Activated CD4-positive, alpha-beta T cell treated with anti-CD3 and anti-CD28 coated beads, Interleukin-2, amount 10 ng/mL, durations not matched to agents 24 days and 14 days (primary cell): ENCODE measurements at regions of chr16 and their contacts with region 1.

Region 1: GRCh38 chr16:23435500-23435899 is 17.5 kb downstream of the COG7 start:
- DNase-seq: peak; percentile 89
- H3K4me3 Mint-ChIP-seq: no peak overlapping the region
- H3K27ac Mint-ChIP-seq: no peak overlapping the region
- H3K4me1 Mint-ChIP-seq: no peaks in the 10 kb centered on the region
- H3K27me3 Mint-ChIP-seq: no peaks in the 10 kb centered on the region

Region 2: GRCh38 chr16:22898874-22899348 is 536.6 kb before region 1 on chr16:
- intact Hi-C with region 1: loop called (anchors 2 kb)
- DNase-seq: peak; percentile 88
- H3K4me3 Mint-ChIP-seq: no peak overlapping the region
- H3K27ac Mint-ChIP-seq: no peak overlapping the region
- H3K4me1 Mint-ChIP-seq: no peaks in the 10 kb centered on the region
- H3K27me3 Mint-ChIP-seq: peaks cover 11% of the 10 kb centered on the region

Region 3: DNA sequence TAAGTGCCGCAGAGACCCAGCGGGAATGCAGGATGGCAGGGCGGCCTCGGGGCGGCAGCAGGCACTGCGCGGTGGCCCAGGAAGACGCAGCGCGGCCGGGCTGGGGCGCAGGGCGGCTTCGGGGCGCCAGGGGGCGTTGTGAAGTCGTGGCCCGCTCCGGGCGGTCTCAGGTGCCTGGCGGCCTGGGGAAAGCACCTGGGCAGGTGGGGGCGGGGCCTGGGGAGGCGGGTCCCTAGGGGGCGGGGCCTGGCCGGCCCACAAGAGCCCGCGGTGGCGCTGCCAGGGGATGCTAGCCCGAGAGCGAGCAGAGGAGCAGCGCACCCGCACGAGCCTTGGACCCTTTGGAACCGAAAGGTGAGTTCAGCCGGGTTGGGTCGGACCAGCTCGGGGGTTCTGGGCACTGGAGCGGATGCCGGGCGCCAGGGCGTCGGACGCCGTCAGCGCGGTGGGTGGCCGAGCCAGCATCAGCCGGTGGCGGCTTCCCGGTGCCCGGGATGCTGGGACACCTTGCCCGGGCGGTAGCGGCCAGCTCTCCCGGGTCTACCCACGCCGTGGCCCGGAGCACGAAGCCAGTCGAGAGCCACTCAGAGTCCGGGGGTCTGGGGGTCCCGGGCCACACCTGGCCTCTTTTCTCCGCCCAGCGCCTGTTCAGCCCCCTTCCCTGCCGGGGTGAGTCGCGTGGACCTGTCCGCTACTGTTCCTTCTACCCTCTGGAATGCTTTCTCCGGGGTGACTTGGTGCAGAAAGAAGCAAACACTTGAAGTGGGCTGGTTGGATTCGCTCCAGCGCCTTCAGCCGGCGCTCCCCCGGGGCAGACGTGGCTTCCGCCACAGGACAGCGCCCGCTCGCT is 252.8 kb before region 1 on chr16 and contains the start of gene SCNN1G:
- intact Hi-C with region 1: loop called (anchors 1 kb)
- DNase-seq: peak; percentile 92
- H3K4me3 Mint-ChIP-seq: peak within 1 kb of the TSS; percentile 50
- H3K27ac Mint-ChIP-seq: no peak within 1 kb of the TSS
- H3K4me1 Mint-ChIP-seq: peaks cover 4% of the 10 kb centered on the region
- H3K27me3 Mint-ChIP-seq: peaks cover 53% of the 10 kb centered on the region
- total RNA-seq, gene SCNN1G: not detected in 2 replicates

Region 4: DNA sequence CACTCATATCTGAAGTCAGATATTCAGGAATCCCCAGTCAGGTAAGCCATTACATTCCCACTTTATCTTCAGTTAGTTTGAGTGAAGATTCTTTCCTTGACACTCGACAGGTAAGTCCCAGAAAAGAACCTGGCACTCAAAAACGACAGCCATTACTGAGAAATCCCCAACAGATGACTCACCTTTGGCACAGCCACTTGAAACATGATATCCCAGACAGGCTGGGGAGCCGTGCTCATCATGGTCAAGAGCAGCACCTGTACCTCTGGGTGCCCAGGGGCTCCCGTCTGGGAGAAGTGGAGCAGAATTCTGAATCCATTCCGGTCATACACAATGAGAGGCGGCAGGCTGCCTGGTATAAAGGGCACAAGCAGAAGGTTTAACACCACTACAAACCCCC is 34.3 kb after region 1 on chr16:
- intact Hi-C with region 1: no loop called
- DNase-seq: no peak
- H3K4me3 Mint-ChIP-seq: no peak overlapping the region
- H3K27ac Mint-ChIP-seq: peak overlapping the region; percentile 45
- H3K4me1 Mint-ChIP-seq: no peaks in the 10 kb centered on the region
- H3K27me3 Mint-ChIP-seq: no peaks in the 10 kb centered on the region

Region 5: GRCh38 chr16:24013733-24014645 is 578.5 kb after region 1 on chr16:
- intact Hi-C with region 1: no loop called
- DNase-seq: peak; percentile 88
- H3K4me3 Mint-ChIP-seq: peak overlapping the region; percentile 70
- H3K27ac Mint-ChIP-seq: peak overlapping the region; percentile 84
- H3K4me1 Mint-ChIP-seq: peaks cover 47% of the 10 kb centered on the region
- H3K27me3 Mint-ChIP-seq: no peaks in the 10 kb centered on the region